Heart left ventricle (tissue), 16 donors: ENCODE measurements at regions of chrX and their contacts with region 1.

Region 1: DNA sequence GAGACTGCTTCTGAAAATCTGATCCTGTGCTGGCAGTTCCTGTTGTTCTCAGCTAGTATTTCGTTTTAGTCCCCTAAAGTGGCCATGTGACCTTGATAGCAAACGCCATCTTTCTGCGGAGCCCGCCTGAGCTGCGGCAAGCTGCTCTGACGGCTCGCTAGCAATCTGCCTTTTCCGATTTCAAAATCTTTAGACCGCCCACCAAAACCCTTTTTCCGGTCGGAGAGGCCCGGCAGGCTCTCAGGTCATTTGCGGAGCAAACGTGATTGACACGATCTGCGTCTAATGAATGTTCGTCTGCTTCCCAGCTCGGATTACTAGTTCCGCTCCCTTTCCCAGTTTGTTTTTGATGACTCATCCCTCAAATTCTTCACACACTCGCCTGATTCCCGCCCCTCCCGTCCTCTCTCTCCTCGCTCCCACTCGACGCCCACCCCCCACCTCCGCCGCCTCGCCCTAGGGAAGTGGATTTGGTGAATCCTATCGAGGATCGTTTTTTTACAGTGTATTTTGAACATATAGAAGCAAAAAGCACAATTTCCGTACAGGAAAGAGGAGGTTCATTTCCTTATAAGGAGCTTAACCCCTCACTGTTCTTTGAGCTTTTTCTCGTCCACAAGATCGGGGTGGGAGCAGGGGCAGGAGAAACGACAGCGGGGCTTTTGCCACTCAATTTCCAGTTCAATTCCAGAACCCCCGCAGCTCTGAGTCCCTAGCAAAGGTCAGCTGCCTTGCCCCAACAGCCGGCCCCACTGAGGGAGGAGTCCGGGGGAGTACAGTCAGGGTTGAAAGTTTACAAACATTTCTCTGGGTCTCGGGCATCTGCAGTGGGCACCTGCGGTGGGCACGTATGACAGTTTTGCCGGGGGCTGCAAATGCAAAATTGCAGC is 37.5 kb downstream of the NLGN3 start:
- DNase-seq: peak; percentile 81 to 90 (median 89)
- ATAC-seq: peak; percentile 92 to 98 (median 94)
- H3K4me3 ChIP-seq: peak overlapping the region in 11 of 12 donors; percentile 12 to 69 (median 54)
- H3K27ac ChIP-seq: peak overlapping the region; percentile 77 to 95 (median 86)
- H3K4me1 ChIP-seq: peaks cover 0 to 12% (median 0%) of the 10 kb centered on the region in 12 donors
- H3K27me3 ChIP-seq: peaks cover 0 to 16% (median 0%) of the 10 kb centered on the region in 9 donors
- CTCF ChIP-seq: no peak
- POLR2A ChIP-seq: peak in 1 of 2 donors; percentile 88

Region 2: DNA sequence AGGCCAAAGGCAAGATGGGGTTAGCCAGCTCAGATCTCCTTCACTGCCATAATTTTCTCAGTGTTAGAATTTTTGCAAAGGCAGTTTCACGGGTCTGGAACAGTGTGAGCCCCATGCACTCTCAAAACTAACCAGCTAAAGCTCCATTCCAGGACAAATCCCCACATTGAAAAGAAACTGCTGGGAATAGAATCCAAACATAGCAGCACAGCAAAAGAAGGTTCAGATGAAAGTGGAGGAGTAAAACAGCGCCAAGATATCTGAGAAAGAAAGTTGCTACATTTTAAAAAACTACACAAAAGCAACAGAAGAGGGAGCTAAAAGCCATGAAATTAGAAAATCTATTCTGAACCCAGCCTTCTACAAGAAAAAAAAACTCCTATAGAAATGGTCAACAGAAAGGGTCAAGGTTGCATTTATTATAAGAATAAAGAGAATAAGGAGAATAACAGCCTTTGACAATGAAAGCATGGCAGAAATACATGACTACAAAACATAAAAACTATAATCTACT is 211.6 kb before region 1 on chrX:
- intact Hi-C with region 1: loop called in 7 of 10 experiments (anchors 2 to 10 kb)
- DNase-seq: no peak
- ATAC-seq: no peak
- H3K4me3 ChIP-seq: no peak overlapping the region
- H3K27ac ChIP-seq: no peak overlapping the region
- H3K4me1 ChIP-seq: no peaks in the 10 kb centered on the region
- H3K27me3 ChIP-seq: peaks cover 0 to 3% (median 0%) of the 10 kb centered on the region in 9 donors
- CTCF ChIP-seq: peak in 6 of 12 donors; percentile 17 to 47 (median 32)
- POLR2A ChIP-seq: no peak

Region 3: DNA sequence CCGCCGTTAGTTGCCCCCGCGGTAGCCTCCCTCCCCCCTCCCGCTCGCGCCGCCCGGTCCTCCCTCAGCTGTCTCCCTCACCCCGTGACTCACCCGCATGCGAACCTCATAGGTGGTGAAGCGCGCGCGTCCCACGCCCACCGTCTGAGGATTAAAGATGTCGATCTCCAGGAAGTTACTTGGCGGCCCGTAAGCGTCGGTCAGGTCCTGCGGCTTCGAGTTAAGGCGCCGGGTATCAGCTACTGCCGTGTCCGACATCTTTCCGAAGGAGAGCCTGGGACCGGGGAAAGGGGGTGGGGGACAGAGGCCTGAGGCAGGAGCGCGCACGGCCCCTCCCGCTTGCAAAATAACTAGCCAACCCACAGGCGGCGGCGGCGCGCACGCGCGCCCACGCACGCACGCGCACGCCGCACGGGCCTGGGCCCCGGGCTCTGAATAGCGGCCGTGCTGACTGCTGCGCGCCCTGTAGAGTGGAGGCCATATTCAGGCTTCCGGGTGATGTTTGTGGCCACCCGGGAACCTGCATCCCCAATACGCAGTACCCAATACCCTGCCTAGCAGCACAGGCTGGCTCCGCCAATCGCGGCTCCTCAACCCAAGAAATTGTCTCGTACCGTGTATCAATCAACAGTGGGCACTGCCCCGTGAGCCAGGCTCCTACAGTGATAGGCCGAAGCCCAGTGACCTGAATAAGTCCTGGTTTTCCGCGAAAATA is 113.9 kb before region 1 on chrX and contains the start of gene SNX12:
- intact Hi-C with region 1: loop called in 1 of 10 experiments (anchors 2 kb)
- DNase-seq: peak; percentile 91 to 94 (median 91)
- ATAC-seq: peak; percentile 97 to 99 (median 98)
- H3K4me3 ChIP-seq: peak within 1 kb of the TSS; percentile 37 to 92 (median 66)
- H3K27ac ChIP-seq: peak within 1 kb of the TSS; percentile 61 to 88 (median 83)
- H3K4me1 ChIP-seq: peaks cover 0 to 19% (median 2%) of the 10 kb centered on the region in 12 donors
- H3K27me3 ChIP-seq: no peaks in the 10 kb centered on the region
- CTCF ChIP-seq: no peak
- POLR2A ChIP-seq: peak in 1 of 2 donors; percentile 77
- total RNA-seq, gene SNX12: 40.2 to 62.5 (median 47.7) TPM

Region 4: GRCh38 chrX:71128915-71129765 is 53.0 kb before region 1 on chrX:
- intact Hi-C with region 1: loop called in 1 of 10 experiments (anchors 10 kb)
- DNase-seq: peak; percentile 50 to 76 (median 61)
- ATAC-seq: peak in 3 of 4 donors; percentile 68 to 81 (median 74)
- H3K4me3 ChIP-seq: no peak overlapping the region
- H3K27ac ChIP-seq: no peak overlapping the region
- H3K4me1 ChIP-seq: no peaks in the 10 kb centered on the region
- H3K27me3 ChIP-seq: no peaks in the 10 kb centered on the region
- CTCF ChIP-seq: peak; percentile 55 to 73 (median 62)
- POLR2A ChIP-seq: no peak

Region 5: GRCh38 chrX:71283403-71284143 is 101.4 kb after region 1 on chrX and contains the start of gene NONO:
- intact Hi-C with region 1: loop called in 1 of 10 experiments (anchors 1 kb)
- DNase-seq: peak; percentile 82 to 93 (median 88)
- ATAC-seq: peak; percentile 93 to 97 (median 95)
- H3K4me3 ChIP-seq: peak within 1 kb of the TSS; percentile 42 to 83 (median 70)
- H3K27ac ChIP-seq: peak within 1 kb of the TSS; percentile 71 to 95 (median 90)
- H3K4me1 ChIP-seq: peaks cover 0 to 25% (median 19%) of the 10 kb centered on the region in 12 donors
- H3K27me3 ChIP-seq: no peaks in the 10 kb centered on the region
- CTCF ChIP-seq: peak in 4 of 12 donors; percentile 6 to 44 (median 22)
- POLR2A ChIP-seq: no peak
- total RNA-seq, gene NONO: 97.0 to 177 (median 113) TPM